AG04449 (cell line): ENCODE measurements at regions of chr1 and their contacts with region 1.

Region 1: DNA sequence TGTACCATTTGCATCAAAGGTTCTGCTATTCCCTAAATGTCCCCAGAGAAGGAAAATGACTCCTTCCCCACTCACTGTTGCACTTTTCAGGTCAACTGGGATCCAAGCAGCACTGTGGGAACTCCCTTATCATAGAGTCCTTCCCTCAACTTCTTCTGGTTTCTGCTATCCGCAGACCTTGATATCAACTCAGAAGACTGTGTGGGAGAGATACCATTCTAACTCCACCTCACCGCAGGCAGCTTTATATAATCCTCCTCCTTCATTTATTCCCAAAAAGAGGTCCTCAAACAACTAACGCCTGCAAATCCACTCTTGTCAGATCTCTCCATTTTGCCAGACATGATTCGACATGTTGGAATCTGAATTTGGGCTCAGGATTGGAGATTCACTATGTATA is 27.3 kb downstream of the LHX9 start:
- DNase-seq: no peak
- H3K4me3 ChIP-seq: no peak overlapping the region
- CTCF ChIP-seq: no peak

Region 2: DNA sequence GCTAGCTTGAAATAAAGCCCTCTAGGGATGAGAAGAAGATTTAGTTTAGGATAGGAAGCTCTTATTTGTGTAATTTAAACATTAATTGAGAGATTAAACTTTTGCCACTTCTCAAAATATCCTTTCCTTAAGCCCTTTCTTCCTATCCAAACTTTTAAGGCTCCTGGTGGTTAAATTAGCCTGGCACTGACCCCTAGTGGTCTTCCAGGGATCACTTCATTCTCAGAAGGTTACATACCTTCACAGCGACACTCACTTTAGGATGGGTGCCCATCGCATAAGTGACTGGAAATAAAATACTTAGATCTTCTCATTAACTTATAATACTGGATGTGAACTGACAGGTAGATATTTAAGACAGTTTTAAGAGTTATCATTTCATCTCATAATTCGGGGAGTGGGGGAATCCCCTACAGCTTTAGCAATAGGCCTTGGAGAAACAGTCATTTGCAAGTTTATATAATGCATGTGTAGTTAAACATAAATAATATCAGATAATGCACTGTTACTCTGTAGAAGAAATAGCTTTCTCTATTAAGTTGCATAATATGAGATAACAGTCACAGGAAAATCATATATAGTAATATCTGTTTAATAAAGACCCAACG is 19.9 kb before region 1 on chr1:
- CTCF ChIA-PET with region 1: interaction called, 11 read pairs
- POLR2A ChIA-PET with region 1: no interaction called
- DNase-seq: no peak
- H3K4me3 ChIP-seq: no peak overlapping the region
- CTCF ChIP-seq: peak; percentile 43

Region 3: DNA sequence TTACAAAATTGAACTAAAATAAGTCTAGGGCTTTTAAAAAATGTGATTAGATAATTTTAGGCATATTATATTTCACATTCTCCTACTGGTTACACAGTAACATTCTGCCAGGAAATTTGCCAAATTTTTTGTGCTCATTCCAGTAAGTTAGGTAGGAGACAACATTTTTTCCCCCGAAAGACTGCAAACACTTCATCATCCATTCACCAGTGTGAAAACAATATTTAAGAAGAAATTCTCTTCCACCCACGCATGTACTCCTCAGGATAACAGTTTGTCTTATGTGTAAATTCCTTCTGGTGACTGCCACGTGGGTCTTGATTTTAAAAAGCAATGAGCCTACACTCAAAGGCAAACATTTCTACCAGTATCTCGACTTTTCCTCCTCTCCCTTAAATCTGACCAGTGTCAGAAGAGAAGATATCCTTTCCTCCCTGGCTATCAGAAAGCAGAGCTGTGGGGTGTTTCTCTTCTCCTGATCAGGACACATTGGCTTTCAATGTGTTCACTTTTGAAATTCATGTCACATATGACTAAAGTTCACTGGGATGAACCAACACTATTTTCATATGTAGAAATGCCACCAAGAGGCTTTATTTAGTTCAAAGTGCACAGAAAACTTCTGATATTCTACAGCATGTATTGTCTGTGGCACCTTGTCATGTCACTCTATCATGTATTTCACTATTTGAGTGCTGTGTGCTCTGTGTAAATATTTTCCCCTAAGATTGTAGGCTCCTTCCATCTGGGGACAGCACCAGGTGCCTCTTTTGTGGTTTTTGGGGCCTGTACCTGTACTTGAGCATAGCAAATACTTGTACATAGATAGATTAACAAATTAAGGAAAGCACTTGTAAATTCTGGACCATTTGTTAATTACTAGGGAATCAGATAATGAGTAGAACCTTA is 11.3 kb after region 1 on chr1:
- CTCF ChIA-PET with region 1: no interaction called
- POLR2A ChIA-PET with region 1: no interaction called
- DNase-seq: peak; percentile 71
- H3K4me3 ChIP-seq: no peak overlapping the region
- CTCF ChIP-seq: no peak